Panc1 (cell line): ENCODE measurements at regions of chr7 and their contacts with region 1.

Region 1: GRCh38 chr7:23645822-23646221 is 34.2 kb upstream of the FAM221A start:
- DNase-seq: no peak
- ATAC-seq: no peak
- H3K4me3 ChIP-seq: no peak overlapping the region
- H3K27ac ChIP-seq: no peak overlapping the region
- H3K4me1 ChIP-seq: no peaks in the 10 kb centered on the region
- H3K27me3 ChIP-seq: no peaks in the 10 kb centered on the region
- CTCF ChIP-seq: no peak

Region 2: DNA sequence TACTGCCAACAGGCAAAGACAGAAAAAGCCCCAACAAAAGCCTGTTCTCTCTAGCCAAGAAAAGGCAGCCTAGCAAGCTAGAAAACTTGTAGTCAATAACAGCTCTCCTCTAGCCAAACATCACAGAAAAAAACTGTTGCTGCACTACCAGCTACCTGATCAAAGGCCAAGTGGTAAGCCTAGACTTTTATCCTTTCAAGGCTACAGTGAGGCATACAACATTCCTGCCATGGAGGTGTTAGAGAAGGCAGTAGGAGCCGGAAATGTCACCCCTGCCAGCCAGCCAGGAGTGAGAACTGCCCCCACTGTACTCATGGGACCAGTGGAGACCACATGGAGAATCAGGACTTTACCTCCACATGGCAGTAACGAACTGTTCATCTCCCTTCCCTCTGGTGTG is 17.5 kb before region 1 on chr7:
- CTCF ChIA-PET with region 1: no interaction called
- POLR2A ChIA-PET with region 1: interaction called, 12 read pairs
- in situ Hi-C with region 1: no loop called
- intact Hi-C with region 1: no loop called
- DNase-seq: no peak
- ATAC-seq: peak; percentile 12; the same call in 1 of the 2 replicates
- H3K4me3 ChIP-seq: no peak overlapping the region
- H3K27ac ChIP-seq: no peak overlapping the region
- H3K4me1 ChIP-seq: no peaks in the 10 kb centered on the region
- H3K27me3 ChIP-seq: no peaks in the 10 kb centered on the region
- CTCF ChIP-seq: no peak